H1 (cell line): ENCODE measurements at regions of chr19 and their contacts with region 1.

Region 1: DNA sequence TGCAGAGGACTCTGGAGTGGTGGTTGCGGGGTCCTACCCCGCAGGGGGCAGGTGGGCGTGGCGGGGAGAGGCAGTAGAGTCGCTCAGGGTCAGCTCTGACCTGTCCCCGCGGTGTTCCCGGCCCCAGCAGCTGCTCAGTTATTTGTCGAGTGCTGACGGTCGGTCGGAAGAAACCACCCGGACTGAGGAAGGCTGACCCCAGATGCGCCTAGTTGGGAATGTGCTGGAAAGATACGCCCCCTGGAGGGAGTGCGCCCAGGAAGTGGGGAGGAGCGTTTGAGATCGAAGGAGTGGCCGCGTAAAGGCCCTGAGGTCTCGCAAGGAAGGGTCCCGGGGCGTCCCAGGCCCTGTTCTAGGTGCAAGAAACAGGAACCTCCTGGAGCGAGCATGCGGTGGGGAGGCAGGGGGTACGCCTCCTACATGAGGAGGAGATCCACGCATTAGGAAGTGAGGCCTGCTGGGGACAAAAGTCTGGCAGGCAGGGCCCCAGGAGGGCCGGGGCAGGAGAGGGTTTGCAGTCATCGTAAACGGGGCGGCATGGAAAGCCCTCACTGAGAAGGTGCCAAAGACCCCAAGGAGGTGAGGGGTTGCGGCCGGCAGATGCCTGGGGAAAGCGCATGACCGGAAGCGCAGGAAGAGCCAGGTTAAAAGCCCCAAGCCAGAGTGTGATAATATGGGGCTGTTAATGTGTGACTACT is 9.2 kb downstream of the CCDC8 start:
- DNase-seq: peak in 1 of 2 experiments; percentile 83
- H3K4me3 ChIP-seq: peak overlapping the region; percentile 18 to 57 (median 40)
- H3K27ac ChIP-seq: no peak overlapping the region
- H3K4me1 ChIP-seq: peaks cover 0 to 27% (median 18%) of the 10 kb centered on the region in 4 experiments; a peak in 5 of 7 replicates
- H3K27me3 ChIP-seq: peaks cover 0 to 34% (median 19%) of the 10 kb centered on the region in 4 experiments; a peak in 6 of 7 replicates
- CTCF ChIP-seq: peak in 1 of 3 experiments; percentile 6; a peak in 1 of 4 replicates
- EP300 ChIP-seq: no peak
- POLR2A ChIP-seq: no peak
- RAD21 ChIP-seq: no peak

Region 2: GRCh38 chr19:46431824-46432223 is 27.6 kb after region 1 on chr19:
- CTCF ChIA-PET with region 1: interaction called, 26 read pairs
- POLR2A ChIA-PET with region 1: interaction called, 6 read pairs
- DNase-seq: peak in 1 of 2 experiments; percentile 76
- H3K4me3 ChIP-seq: no peak overlapping the region
- H3K27ac ChIP-seq: no peak overlapping the region
- H3K4me1 ChIP-seq: peaks cover 3 to 6% (median 5%) of the 10 kb centered on the region in 4 experiments; a peak in 6 of 7 replicates
- H3K27me3 ChIP-seq: peaks cover 0 to 13% (median 11%) of the 10 kb centered on the region in 4 experiments; a peak in 5 of 7 replicates
- CTCF ChIP-seq: peak; percentile 66 to 72 (median 68)
- EP300 ChIP-seq: no peak
- POLR2A ChIP-seq: no peak
- RAD21 ChIP-seq: peak; percentile 67 to 77

Region 3: GRCh38 chr19:46487802-46488445 is 83.7 kb after region 1 on chr19:
- CTCF ChIA-PET with region 1: interaction called, 254 read pairs
- POLR2A ChIA-PET with region 1: interaction called, 5 read pairs
- DNase-seq: peak; percentile 39 to 98
- H3K4me3 ChIP-seq: peak overlapping the region in 3 of 4 experiments; percentile 31 to 50 (median 43); a peak in 6 of 8 replicates
- H3K27ac ChIP-seq: no peak overlapping the region
- H3K4me1 ChIP-seq: peaks cover 0 to 23% (median 14%) of the 10 kb centered on the region in 4 experiments; a peak in 6 of 7 replicates
- H3K27me3 ChIP-seq: peaks cover 21 to 64% (median 53%) of the 10 kb centered on the region in 4 experiments
- CTCF ChIP-seq: peak; percentile 91 to 98 (median 97)
- EP300 ChIP-seq: no peak
- POLR2A ChIP-seq: no peak
- RAD21 ChIP-seq: peak; percentile 98 to 99

Region 4: DNA sequence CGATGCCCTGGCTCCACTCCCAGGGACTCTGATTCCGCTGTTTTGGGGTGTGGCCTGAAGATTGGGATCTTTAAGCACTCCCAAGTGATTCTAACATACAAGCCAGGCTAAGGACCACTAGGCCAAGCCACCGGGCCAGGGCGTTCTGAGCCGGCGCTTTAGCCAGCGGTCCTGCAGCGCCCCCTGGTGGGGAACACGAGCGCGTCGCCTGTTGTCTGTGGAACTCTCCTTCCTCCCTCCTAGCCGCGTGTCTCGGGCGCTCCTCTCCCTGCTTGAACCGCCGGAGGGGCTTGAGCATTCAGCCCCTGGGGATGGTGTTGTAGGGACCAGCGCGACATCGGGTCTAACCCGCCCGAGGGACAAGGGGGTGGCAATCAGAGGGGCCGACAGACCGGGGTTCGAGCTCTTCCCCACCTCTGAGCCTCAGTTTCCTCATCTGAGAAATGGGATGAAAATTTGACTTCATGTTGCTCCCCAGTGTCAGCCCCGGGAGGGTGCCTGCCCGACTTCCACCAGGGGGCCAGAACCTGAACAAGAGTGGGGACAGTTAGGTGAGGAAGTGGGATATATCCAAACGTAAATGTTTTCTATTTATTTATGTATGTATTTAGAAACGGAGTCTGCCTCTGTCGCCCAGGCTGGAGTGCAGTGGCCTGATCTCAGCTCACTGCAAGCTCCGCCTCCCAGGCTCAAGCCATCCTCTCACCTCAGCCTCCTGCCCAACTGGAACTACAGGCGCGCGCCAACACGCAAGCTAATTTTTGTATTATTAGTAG is 109.4 kb after region 1 on chr19:
- CTCF ChIA-PET with region 1: interaction called, 16 read pairs
- POLR2A ChIA-PET with region 1: no interaction called
- DNase-seq: peak; percentile 65 to 99
- H3K4me3 ChIP-seq: no peak overlapping the region
- H3K27ac ChIP-seq: no peak overlapping the region
- H3K4me1 ChIP-seq: no peaks in the 10 kb centered on the region
- H3K27me3 ChIP-seq: no peaks in the 10 kb centered on the region
- CTCF ChIP-seq: peak; percentile 87 to 98 (median 91)
- EP300 ChIP-seq: no peak
- POLR2A ChIP-seq: no peak
- RAD21 ChIP-seq: peak; percentile 97 to 99